Astrocyte of the cerebellum (primary cell): ENCODE measurements at regions of chr14 and their contacts with region 1.

Region 1: GRCh38 chr14:74516451-74517155 is 23.0 kb downstream of the ISCA2 start:
- DNase-seq: no peak
- H3K4me3 ChIP-seq: no peak overlapping the region
- CTCF ChIP-seq: no peak

Region 2: DNA sequence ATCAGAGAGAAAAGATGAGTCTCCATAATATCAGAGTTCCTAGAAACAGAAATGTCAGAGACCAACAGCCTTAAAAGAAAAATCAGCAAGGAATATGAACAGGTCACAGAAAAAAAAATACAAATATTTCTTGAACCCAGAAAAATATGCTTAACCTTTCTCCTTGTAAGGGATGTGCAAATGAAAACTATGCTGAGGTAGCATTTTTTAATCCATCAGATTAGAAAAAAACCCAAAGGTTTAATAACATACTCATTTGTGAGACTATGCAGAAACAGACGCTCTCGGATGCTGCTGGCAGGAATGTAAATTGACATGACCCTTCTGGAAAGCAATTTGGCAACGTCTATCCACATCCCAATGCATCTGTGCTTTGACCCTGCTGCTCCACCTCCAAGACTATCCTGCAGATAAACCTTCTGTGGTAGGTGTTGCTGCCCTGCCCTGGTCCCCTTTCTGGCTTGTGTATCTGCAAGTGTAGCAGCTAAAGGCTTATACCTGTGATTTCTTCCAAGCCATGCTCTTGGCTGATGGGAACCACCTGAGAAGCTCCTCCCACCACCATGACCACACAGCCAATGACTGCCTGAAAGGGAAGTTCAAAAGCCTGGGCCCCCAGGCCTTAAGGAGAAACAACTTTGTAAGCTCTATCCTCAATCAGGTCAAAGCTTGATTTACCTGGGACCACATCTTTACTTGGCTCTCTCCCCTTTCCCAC is 46.1 kb after region 1 on chr14:
- in situ Hi-C with region 1: loop called (anchors 5 kb)
- DNase-seq: no peak
- H3K4me3 ChIP-seq: no peak overlapping the region
- CTCF ChIP-seq: no peak

Region 3: DNA sequence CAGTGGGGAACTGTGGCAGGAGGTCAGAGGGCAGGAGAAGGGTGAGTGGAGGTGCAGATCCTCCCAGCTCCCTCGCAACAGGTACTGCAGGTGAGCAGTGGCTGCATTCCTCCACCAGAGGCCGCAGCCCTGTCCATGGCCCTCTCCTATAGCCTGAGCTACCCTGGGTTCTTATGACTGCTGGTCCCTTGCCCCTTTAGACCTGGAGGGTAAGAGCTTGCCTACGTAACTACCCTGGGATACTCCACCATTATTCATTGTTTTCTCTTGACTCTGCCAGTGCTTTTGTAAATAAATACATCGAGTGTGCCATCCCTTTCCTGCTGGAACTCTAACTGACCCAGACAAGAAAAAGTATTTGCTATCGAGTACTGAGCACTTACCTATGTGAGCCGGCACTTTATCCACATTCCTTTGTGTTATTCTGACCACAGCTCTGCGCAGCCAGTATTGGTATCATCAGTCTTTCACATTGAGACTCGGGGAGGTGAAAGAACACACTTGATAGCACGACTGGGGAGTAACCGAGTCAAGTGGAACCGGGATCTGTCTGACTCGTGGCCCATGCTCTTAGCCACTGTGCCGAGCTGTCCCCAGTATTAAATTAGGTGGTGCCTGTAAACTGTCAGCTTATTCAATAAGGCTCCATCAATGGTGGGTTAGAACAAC is 57.0 kb after region 1 on chr14:
- in situ Hi-C with region 1: no loop called
- DNase-seq: no peak
- H3K4me3 ChIP-seq: no peak overlapping the region
- CTCF ChIP-seq: peak; percentile 18